Activated CD4-positive, alpha-beta T cell treated with anti-CD3 and anti-CD28 coated beads for 36 hours (primary cell): ENCODE measurements at regions of chr1 and their contacts with region 1.

Region 1: DNA sequence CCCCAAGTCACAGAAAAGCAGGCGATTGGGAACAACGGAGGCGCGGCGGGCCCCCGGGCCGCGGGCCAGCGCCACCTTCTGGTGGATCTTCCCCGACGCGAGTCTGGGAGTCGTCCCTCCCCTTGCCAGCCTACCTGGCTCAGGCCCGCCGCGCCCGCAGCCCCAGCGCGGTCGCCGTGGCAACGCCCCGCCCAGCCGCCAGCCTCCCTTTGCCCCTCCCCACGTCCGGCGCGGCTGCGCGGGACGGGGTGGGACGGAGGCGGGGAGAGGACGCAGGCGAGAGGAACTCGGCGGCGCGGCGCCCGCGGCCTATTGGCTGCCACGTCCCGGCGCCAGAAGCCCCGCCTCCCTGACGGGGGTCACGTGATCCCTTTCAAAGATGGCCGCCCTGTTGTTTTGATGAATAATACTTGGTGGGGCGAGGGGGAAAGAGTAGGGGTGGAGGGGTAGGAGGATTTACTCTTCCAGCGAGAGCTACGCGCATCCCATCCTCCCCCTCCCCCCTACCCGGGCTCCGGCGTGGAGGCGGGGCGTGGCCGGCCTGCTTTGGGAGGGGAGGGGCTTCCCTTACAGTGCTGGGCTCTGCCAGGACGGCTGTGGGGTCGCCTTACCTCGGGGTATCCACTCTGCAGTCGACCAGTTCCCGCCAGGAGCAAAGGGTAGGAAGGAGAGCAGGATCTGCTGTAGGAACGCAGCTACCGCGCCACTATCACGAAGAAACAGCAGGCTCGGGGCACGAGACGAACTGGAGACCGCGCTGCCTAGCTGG is at the start of gene UBE4B:
- DNase-seq: peak; percentile 99
- ATAC-seq: peak; percentile 96
- H3K4me3 Mint-ChIP-seq: peak within 1 kb of the TSS; percentile 88
- H3K27ac Mint-ChIP-seq: peak within 1 kb of the TSS; percentile 74
- H3K4me1 Mint-ChIP-seq: peaks cover 24% of the 10 kb centered on the region
- H3K27me3 Mint-ChIP-seq: no peaks in the 10 kb centered on the region
- total RNA-seq, gene UBE4B: 26.1 to 31.8 TPM

Region 2: GRCh38 chr1:9588551-9589143 is 444.1 kb before region 1 on chr1 and contains the start of gene TMEM201:
- CTCF ChIA-PET with region 1: no interaction called
- POLR2A ChIA-PET with region 1: no interaction called
- intact Hi-C with region 1: loop called in 1 of 2 experiments (anchors 1 kb)
- DNase-seq: peak; percentile 97
- ATAC-seq: peak; percentile 92
- H3K4me3 Mint-ChIP-seq: peak within 1 kb of the TSS; percentile 80
- H3K27ac Mint-ChIP-seq: peak within 1 kb of the TSS; percentile 79
- H3K4me1 Mint-ChIP-seq: peaks cover 26% of the 10 kb centered on the region
- H3K27me3 Mint-ChIP-seq: no peaks in the 10 kb centered on the region
- total RNA-seq, gene TMEM201: 14.6 to 15.1 TPM

Region 3: GRCh38 chr1:9784508-9785133 is 248.2 kb before region 1 on chr1:
- CTCF ChIA-PET with region 1: interaction called, 5 read pairs
- POLR2A ChIA-PET with region 1: no interaction called
- intact Hi-C with region 1: loop called in 1 of 2 experiments (anchors 1 kb)
- DNase-seq: peak; percentile 83
- ATAC-seq: peak; percentile 45
- H3K4me3 Mint-ChIP-seq: no peak overlapping the region
- H3K27ac Mint-ChIP-seq: no peak overlapping the region
- H3K4me1 Mint-ChIP-seq: peaks cover 39% of the 10 kb centered on the region
- H3K27me3 Mint-ChIP-seq: no peaks in the 10 kb centered on the region

Region 4: DNA sequence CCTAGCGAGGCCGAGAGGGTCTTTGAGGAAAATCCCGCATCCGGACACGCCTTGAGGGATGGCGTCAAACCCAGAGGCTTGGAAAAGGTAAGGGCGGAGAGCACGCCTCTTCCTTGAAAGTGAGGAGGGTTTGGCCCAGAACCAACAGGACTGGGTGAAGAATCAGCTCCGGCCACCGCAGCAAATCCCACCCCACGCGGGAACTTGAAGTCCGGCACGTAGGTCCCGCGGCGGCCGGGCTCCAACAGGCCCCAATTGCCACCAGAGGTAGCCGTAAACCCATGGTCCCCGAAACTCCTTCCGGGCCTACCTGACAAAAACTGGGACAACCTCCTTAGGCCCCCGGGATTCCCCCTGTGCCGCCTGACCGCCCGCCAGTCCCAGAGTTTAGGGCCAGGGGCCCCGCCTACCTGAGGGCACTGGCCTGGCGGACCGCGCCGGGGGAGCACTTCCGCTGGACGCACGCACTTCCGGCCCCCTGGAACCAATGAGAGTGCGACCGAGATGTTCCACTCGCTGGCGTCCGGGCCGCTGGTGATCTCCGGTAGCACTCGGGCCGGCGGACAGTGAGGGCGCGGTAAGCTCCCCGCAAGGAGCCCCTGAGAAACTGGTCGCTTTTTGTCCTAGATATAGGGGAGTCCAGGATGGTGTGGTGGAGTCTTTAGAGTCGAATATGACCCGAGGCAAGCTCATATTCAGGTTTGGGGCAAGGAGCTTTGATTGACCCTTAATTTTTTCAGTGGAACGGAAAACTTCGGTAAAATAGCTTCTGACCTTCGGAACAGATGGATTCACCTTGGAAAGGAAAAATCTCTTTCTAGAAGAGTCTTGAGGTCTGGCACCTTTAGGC is 89.6 kb before region 1 on chr1 and contains the starts of genes LZIC and NMNAT1:
- CTCF ChIA-PET with region 1: interaction called, 3 read pairs
- POLR2A ChIA-PET with region 1: interaction called, 3 read pairs
- intact Hi-C with region 1: loop called (anchors 1 to 2 kb)
- DNase-seq: peak; percentile 95
- ATAC-seq: peak; percentile 97
- H3K4me3 Mint-ChIP-seq: peak within 1 kb of the TSS; percentile 96
- H3K27ac Mint-ChIP-seq: peak within 1 kb of the TSS; percentile 98
- H3K4me1 Mint-ChIP-seq: peaks cover 18% of the 10 kb centered on the region
- H3K27me3 Mint-ChIP-seq: no peaks in the 10 kb centered on the region
- total RNA-seq, gene LZIC: 23.4 to 32.0 TPM
- total RNA-seq, gene NMNAT1: 7.3 to 8.5 TPM

Region 5: DNA sequence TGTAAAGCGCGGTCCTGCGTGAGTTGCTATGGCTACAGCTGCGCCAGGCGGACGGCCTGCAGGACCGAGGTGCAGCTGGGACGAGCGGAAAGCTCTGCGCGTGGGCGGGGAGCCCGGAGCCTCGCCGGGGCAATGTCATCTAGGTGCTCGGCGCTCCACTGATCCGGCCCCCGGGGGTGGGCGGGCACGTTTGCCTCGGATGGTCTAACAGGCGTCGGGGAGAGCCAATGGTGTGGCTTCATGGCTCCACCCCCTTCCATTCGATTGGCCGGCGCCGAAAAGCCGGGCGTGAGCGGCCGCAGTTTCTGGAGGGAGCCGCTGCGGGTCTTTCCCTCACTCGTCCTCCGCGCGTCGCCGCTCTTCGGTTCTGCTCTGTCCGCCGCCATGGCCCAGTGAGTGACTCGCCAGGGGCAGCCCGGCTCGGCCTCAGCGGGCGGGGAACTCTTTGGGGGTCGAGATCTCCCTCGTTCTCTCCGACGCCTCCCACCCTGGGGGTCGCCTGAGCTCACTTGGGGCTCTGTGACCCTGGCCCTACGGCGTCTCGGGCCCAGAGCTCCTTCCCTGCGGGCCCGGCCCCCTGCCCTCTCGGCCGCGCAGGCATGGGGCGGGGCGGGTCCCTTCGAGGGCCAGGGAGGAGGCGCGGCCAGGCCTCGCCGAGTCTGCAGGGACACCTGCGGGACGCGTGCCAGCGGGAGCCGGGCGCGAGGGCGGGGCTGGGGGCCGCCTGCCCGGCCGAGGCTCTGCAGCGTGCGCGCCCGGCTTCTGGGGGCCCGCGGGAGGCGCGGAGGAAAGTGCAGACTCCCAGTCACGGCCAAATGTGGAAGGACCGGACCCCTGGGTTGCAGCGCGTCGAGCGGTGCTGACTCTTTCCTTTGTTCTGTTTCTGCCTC is 366.2 kb after region 1 on chr1 and contains the start of gene PGD:
- CTCF ChIA-PET with region 1: interaction called, 4 read pairs
- POLR2A ChIA-PET with region 1: no interaction called
- intact Hi-C with region 1: loop called in 1 of 2 experiments (anchors 1 kb)
- DNase-seq: peak; percentile 99
- ATAC-seq: peak; percentile 97
- H3K4me3 Mint-ChIP-seq: peak within 1 kb of the TSS; percentile 86
- H3K27ac Mint-ChIP-seq: peak within 1 kb of the TSS; percentile 78
- H3K4me1 Mint-ChIP-seq: peaks cover 31% of the 10 kb centered on the region
- H3K27me3 Mint-ChIP-seq: no peaks in the 10 kb centered on the region
- total RNA-seq, gene PGD: 91.6 to 93.7 TPM

Region 6: GRCh38 chr1:11012250-11013171 is 979.7 kb after region 1 on chr1 and contains the start of gene TARDBP:
- CTCF ChIA-PET with region 1: no interaction called
- POLR2A ChIA-PET with region 1: interaction called, 3 read pairs
- intact Hi-C with region 1: loop called in 1 of 2 experiments (anchors 2 kb)
- DNase-seq: peak; percentile 94
- ATAC-seq: peak; percentile 89
- H3K4me3 Mint-ChIP-seq: peak within 1 kb of the TSS; percentile 93
- H3K27ac Mint-ChIP-seq: peak within 1 kb of the TSS; percentile 99
- H3K4me1 Mint-ChIP-seq: peaks cover 30% of the 10 kb centered on the region
- H3K27me3 Mint-ChIP-seq: no peaks in the 10 kb centered on the region
- total RNA-seq, gene TARDBP: 180 to 190 TPM